Breast epithelium (tissue), 4 donors: ENCODE measurements at regions of chr15 and their contacts with region 1.

Region 1: GRCh38 chr15:100341662-100342560 is at the start of gene ADAMTS17:
- DNase-seq: peak; percentile 94 to 96
- H3K4me3 ChIP-seq: peak within 1 kb of the TSS; percentile 58 to 82 (median 79)
- H3K27ac ChIP-seq: peak within 1 kb of the TSS; percentile 53 to 57
- H3K4me1 ChIP-seq: no peaks in the 10 kb centered on the region
- H3K27me3 ChIP-seq: no peaks in the 10 kb centered on the region
- CTCF ChIP-seq: peak; percentile 89 to 97 (median 91)
- POLR2A ChIP-seq: peak; percentile 64
- total RNA-seq, gene ADAMTS17: 5.1 to 8.0 (median 5.9) TPM

Region 2: DNA sequence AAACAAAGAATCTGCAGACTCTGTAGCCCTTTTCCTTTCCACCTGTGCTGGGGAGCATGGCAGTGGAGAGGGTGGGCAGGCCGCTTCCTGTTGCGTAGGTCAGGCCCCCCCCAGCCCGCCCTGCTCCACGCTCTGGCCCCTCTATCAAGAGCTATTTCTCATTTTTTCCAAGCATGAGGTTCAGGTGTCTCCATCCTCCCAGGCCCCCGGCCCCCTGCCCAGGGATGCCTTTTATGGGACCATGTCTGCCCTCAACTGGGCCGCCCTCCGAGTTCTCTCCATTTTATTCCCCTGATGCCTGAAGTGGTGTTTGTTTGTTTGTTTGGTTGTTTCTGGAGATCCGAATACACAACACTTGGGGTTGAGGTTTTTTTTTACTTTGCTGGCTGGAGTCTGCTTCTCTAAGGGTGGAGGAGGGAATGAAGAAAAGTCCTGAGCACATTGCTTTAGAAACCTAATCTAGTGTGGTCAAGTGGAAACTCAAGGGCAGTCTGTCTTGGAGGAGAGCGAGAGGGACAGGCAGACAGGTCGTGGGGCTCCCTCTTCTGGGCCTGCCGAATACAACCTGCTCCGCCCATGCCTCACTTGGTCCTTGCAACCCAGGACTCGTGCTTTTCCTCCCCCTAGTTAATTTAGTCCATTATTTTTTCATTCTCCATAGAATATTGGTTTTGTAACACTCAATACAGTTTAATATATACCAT is 432.2 kb before region 1 on chr15:
- intact Hi-C with region 1: loop called (anchors 10 kb)
- DNase-seq: no peak
- H3K4me3 ChIP-seq: no peak overlapping the region
- H3K27ac ChIP-seq: no peak overlapping the region
- H3K4me1 ChIP-seq: no peaks in the 10 kb centered on the region
- H3K27me3 ChIP-seq: no peaks in the 10 kb centered on the region
- CTCF ChIP-seq: no peak
- POLR2A ChIP-seq: no peak

Region 3: GRCh38 chr15:99963096-99963825 is 378.6 kb before region 1 on chr15:
- intact Hi-C with region 1: no loop called
- DNase-seq: peak in 1 of 2 donors; percentile 17
- H3K4me3 ChIP-seq: no peak overlapping the region
- H3K27ac ChIP-seq: no peak overlapping the region
- H3K4me1 ChIP-seq: no peaks in the 10 kb centered on the region
- H3K27me3 ChIP-seq: no peaks in the 10 kb centered on the region
- CTCF ChIP-seq: no peak
- POLR2A ChIP-seq: no peak

Region 4: GRCh38 chr15:100526027-100526481 is 184.1 kb after region 1 on chr15:
- intact Hi-C with region 1: loop called (anchors 5 kb)
- DNase-seq: peak; percentile 76 to 79
- H3K4me3 ChIP-seq: no peak overlapping the region
- H3K27ac ChIP-seq: peak overlapping the region; percentile 39 to 55
- H3K4me1 ChIP-seq: peaks cover 0 to 9% of the 10 kb centered on the region in 2 donors
- H3K27me3 ChIP-seq: no peaks in the 10 kb centered on the region
- CTCF ChIP-seq: peak in 1 of 3 donors; percentile 12
- POLR2A ChIP-seq: no peak

Region 5: GRCh38 chr15:100627789-100628395 is 286.0 kb after region 1 on chr15:
- intact Hi-C with region 1: no loop called
- DNase-seq: peak; percentile 64 to 69
- H3K4me3 ChIP-seq: no peak overlapping the region
- H3K27ac ChIP-seq: no peak overlapping the region
- H3K4me1 ChIP-seq: no peaks in the 10 kb centered on the region
- H3K27me3 ChIP-seq: no peaks in the 10 kb centered on the region
- CTCF ChIP-seq: peak; percentile 85 to 90 (median 88)
- POLR2A ChIP-seq: no peak